Calu3 (cell line): ENCODE measurements at regions of chr10 and their contacts with region 1.

Region 1: GRCh38 chr10:57992321-57993077 is 275.2 kb downstream of the IPMK start:
- DNase-seq: peak; percentile 85
- H3K4me3 Mint-ChIP-seq: peak overlapping the region; percentile 74
- H3K27ac Mint-ChIP-seq: peak overlapping the region; percentile 82
- H3K4me1 Mint-ChIP-seq: peaks cover 50% of the 10 kb centered on the region
- H3K27me3 Mint-ChIP-seq: no peaks in the 10 kb centered on the region
- CTCF ChIP-seq: no peak

Region 2: DNA sequence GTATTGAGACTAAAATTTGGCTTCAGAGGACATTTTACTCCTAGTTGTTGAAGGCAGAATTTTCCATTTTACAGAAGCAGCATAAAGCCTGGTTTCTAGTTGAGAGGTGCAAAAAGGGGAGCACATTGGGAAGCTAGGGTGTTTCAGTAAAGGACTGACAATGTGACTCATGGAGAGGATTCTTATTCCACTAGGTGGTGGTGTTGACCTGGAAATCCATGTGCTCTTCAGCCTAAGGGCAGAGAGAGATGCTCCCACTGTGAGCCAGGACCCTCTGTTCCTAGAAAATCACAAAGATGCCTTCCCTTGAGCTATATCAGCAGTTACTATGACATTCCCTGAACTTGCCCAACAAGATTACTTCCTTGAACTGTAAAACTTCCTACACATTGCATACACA is 412.6 kb before region 1 on chr10:
- CTCF ChIA-PET with region 1: no interaction called
- intact Hi-C with region 1: loop called (anchors 2 kb)
- DNase-seq: peak; percentile 51
- H3K4me3 Mint-ChIP-seq: no peak overlapping the region
- H3K27ac Mint-ChIP-seq: peak overlapping the region; percentile 42
- H3K4me1 Mint-ChIP-seq: no peaks in the 10 kb centered on the region
- H3K27me3 Mint-ChIP-seq: no peaks in the 10 kb centered on the region
- CTCF ChIP-seq: peak; percentile 62

Region 3: DNA sequence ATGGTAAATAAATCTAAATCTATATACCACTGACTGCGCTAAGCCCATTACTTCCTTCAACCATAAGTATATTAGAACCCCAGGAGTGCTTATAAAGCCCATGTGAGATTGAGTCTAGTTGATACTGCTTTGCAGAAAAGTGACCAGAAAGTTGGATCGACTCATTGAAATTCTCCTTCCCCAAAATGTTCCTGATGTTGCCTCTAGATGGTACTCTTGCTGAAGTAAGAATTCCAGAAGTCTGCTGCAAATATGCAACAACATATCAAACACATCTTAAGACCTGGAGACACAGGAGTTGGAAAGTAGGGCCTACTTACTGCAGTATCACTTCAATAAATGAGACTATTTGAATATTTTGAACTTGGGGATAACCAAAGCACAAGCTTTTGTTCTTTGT is 275.6 kb before region 1 on chr10:
- CTCF ChIA-PET with region 1: no interaction called
- intact Hi-C with region 1: loop called (anchors 1 kb)
- DNase-seq: peak; percentile 12
- H3K4me3 Mint-ChIP-seq: no peak overlapping the region
- H3K27ac Mint-ChIP-seq: no peak overlapping the region
- H3K4me1 Mint-ChIP-seq: peaks cover 25% of the 10 kb centered on the region
- H3K27me3 Mint-ChIP-seq: no peaks in the 10 kb centered on the region
- CTCF ChIP-seq: peak; percentile 50

Region 4: GRCh38 chr10:57864765-57865676 is 127.5 kb before region 1 on chr10:
- CTCF ChIA-PET with region 1: interaction called, 6 read pairs
- intact Hi-C with region 1: loop called (anchors 2 kb)
- DNase-seq: peak; percentile 48
- H3K4me3 Mint-ChIP-seq: peak overlapping the region; percentile 21
- H3K27ac Mint-ChIP-seq: peak overlapping the region; percentile 81
- H3K4me1 Mint-ChIP-seq: peaks cover 64% of the 10 kb centered on the region
- H3K27me3 Mint-ChIP-seq: no peaks in the 10 kb centered on the region
- CTCF ChIP-seq: no peak

Region 5: DNA sequence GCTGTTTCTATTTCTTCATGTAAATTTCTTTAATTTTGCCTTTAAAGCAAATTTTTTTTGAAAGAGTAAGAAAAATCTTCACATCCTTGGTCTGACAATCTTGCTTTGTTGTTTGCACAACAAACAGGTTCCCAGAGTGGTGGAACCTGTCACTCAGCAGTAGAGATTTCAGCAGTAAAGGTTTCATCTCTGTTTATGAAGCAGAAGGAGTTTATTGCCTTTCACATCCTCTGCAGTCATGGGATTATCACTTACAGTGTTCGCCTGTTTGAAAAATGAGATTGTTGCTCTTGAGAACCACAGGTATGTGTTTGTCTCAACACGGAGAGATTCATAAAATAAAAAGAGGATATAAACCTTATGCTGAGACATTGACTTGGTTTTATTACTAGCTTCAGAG is 67.5 kb before region 1 on chr10:
- CTCF ChIA-PET with region 1: no interaction called
- intact Hi-C with region 1: loop called (anchors 2 kb)
- DNase-seq: peak; percentile 55
- H3K4me3 Mint-ChIP-seq: peak overlapping the region; percentile 9
- H3K27ac Mint-ChIP-seq: peak overlapping the region; percentile 38
- H3K4me1 Mint-ChIP-seq: peaks cover 46% of the 10 kb centered on the region
- H3K27me3 Mint-ChIP-seq: no peaks in the 10 kb centered on the region
- CTCF ChIP-seq: no peak

Region 6: DNA sequence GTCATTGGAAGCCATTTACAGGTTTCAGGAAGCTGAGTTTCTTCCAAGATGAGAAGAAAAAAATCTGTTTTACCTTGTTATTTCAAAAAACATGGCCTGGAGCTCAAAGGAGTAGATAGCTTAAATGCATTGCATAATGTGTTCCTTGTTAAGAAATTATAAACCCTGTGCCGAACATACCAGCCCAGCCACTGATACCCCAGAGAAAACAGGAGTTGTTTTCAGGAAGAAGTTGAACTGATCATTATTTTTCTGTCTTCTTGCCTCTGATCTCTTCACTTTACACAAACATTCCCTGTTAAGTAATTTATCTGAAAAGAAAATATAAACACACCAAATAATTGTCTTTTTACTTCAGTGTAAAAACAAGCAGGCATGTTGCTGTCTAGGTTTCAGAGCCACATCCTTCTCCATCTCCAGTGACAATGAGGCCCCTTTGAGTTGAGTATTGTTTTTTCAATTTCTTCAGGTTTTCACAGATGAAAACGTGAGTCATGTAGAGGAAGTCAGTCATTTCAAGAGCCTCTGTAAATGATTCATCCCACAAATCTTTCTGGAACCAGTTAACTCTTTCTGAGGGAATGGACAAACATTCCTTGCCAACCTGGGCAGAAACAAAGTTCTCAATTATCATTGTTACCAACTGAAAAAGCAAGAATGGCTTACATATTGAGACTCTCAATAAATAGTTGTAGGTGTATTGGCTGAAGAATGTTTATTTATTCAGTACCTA is 31.0 kb after region 1 on chr10:
- CTCF ChIA-PET with region 1: interaction called, 3 read pairs
- intact Hi-C with region 1: loop called (anchors 2 kb)
- DNase-seq: peak; percentile 52
- H3K4me3 Mint-ChIP-seq: peak overlapping the region; percentile 4
- H3K27ac Mint-ChIP-seq: peak overlapping the region; percentile 84
- H3K4me1 Mint-ChIP-seq: peaks cover 34% of the 10 kb centered on the region
- H3K27me3 Mint-ChIP-seq: no peaks in the 10 kb centered on the region
- CTCF ChIP-seq: no peak

Region 7: DNA sequence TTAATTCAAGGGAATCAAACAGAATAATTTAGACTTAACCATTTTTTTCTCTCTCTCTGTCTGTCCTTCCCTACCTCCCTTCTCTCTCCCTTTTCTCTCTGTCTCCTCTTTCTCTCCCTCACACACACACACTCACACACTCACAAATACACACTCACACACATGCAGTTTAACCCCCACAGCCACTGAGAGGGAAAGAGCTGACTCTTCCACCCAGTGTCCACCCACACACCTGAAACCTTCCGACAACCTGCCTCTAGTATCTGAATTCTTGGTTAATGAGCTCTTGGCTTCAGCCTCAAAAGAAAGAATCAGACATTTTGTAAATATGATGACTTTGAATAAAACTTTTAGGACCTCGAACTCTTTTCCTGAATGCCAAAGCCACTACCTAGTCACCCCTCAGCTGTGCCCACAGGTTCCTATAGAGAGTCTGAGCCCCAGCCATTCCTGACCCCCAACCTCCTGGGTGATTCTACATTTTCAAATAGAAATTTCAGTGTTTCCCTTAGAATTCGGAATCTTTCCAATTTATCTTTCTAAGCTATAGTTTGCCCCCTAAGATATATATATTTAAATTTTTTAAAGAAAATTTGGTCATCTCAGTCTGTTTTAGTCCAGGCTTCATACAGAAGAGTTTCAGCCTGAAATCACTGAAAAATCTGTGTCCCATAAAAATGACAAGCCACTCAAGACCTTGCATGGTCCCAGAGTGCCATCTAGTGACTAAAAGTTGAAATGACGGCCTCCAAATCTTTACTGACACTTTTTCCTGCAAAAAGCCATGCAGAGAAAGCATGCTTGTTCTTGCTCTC is 72.4 kb after region 1 on chr10:
- CTCF ChIA-PET with region 1: interaction called, 5 read pairs
- intact Hi-C with region 1: loop called (anchors 2 kb)
- DNase-seq: peak; percentile 61
- H3K4me3 Mint-ChIP-seq: peak overlapping the region; percentile 1
- H3K27ac Mint-ChIP-seq: peak overlapping the region; percentile 15
- H3K4me1 Mint-ChIP-seq: peaks cover 26% of the 10 kb centered on the region
- H3K27me3 Mint-ChIP-seq: no peaks in the 10 kb centered on the region
- CTCF ChIP-seq: peak; percentile 87